ENCODE measurements at regions of chr10 and their contacts with region 1.

Region 1: GRCh38 chr10:43396928-43397624 is 11.9 kb downstream of the HNRNPF start:
- DNase-seq: peak; percentile 44 to 83 (median 59)
- ATAC-seq: peak; percentile 71 to 80 (median 76)
- H3K4me3 ChIP-seq: peak overlapping the region; percentile 39 to 64
- H3K4me3 Mint-ChIP-seq: peak overlapping the region; percentile 80 to 97 (median 89)
- H3K27ac ChIP-seq: peak overlapping the region; percentile 87
- H3K27ac Mint-ChIP-seq: peak overlapping the region; percentile 89 to 95
- H3K4me1 ChIP-seq: peaks cover 51 to 67% of the 10 kb centered on the region in 2 experiments
- H3K4me1 Mint-ChIP-seq: peaks cover 82 to 91% (median 86%) of the 10 kb centered on the region in 3 donors
- H3K27me3 ChIP-seq: no peaks in the 10 kb centered on the region
- H3K27me3 Mint-ChIP-seq: no peaks in the 10 kb centered on the region

Region 2: DNA sequence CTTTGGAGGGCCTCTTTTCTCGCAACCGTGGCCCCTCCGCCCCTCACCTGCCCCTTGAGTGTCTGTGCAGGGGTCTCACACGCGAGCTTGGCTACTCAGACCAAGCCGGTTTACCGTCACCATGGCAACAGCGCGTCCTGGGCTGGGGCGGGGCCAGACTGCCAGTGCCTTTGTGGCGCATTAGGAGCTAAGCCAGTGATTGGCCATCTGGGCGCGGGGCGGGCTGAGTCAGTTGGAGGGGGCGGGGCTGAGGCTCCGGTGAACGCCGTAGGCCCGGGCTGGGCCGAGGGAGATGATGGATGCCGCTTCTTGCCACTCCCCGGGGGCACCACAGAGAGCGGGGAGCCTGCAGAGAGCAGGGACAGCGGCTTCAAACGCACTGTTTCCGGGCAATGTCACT is 74.3 kb before region 1 on chr10:
- CTCF ChIA-PET with region 1: no interaction called
- POLR2A ChIA-PET with region 1: no interaction called
- DNase-seq: peak; percentile 40 to 90 (median 78)
- ATAC-seq: peak; percentile 87 to 99 (median 93)
- H3K4me3 ChIP-seq: peak overlapping the region in 1 of 2 donors; percentile 16
- H3K4me3 Mint-ChIP-seq: peak overlapping the region in 2 of 3 donors; percentile 6 to 57
- H3K27ac ChIP-seq: no peak overlapping the region
- H3K27ac Mint-ChIP-seq: no peak overlapping the region
- H3K4me1 ChIP-seq: peaks cover 0 to 13% of the 10 kb centered on the region in 2 experiments
- H3K4me1 Mint-ChIP-seq: peaks cover 15 to 25% (median 19%) of the 10 kb centered on the region in 3 donors
- H3K27me3 ChIP-seq: peaks cover 0 to 16% of the 10 kb centered on the region in 2 experiments
- H3K27me3 Mint-ChIP-seq: peaks cover 0 to 18% of the 10 kb centered on the region in 2 donors

Region 3: GRCh38 chr10:43407576-43408330 is 10.7 kb after region 1 on chr10:
- CTCF ChIA-PET with region 1: interaction called, 4 to 5 read pairs
- POLR2A ChIA-PET with region 1: interaction called in 1 of 2 experiments, 10 read pairs
- DNase-seq: peak; percentile 49 to 92 (median 76)
- ATAC-seq: peak; percentile 35 to 45 (median 42)
- H3K4me3 ChIP-seq: peak overlapping the region; percentile 75 to 94
- H3K4me3 Mint-ChIP-seq: peak overlapping the region; percentile 94 to 100 (median 97)
- H3K27ac ChIP-seq: peak overlapping the region; percentile 100
- H3K27ac Mint-ChIP-seq: peak overlapping the region; percentile 94 to 99
- H3K4me1 ChIP-seq: peaks cover 20 to 56% of the 10 kb centered on the region in 2 experiments
- H3K4me1 Mint-ChIP-seq: peaks cover 38 to 62% (median 44%) of the 10 kb centered on the region in 3 donors
- H3K27me3 ChIP-seq: no peaks in the 10 kb centered on the region
- H3K27me3 Mint-ChIP-seq: no peaks in the 10 kb centered on the region

Region 4: GRCh38 chr10:43436400-43437140 is 39.5 kb after region 1 on chr10 and contains the start of gene ZNF487:
- CTCF ChIA-PET with region 1: interaction called, 3 to 4 read pairs
- POLR2A ChIA-PET with region 1: interaction called in 1 of 2 experiments, 10 read pairs
- DNase-seq: peak; percentile 72 to 94 (median 83)
- ATAC-seq: peak; percentile 90 to 95 (median 95)
- H3K4me3 ChIP-seq: peak within 1 kb of the TSS; percentile 72 to 92
- H3K4me3 Mint-ChIP-seq: peak within 1 kb of the TSS; percentile 95 to 96 (median 95)
- H3K27ac ChIP-seq: peak within 1 kb of the TSS; percentile 89
- H3K27ac Mint-ChIP-seq: peak within 1 kb of the TSS; percentile 98 to 99
- H3K4me1 ChIP-seq: peaks cover 4 to 25% of the 10 kb centered on the region in 2 experiments
- H3K4me1 Mint-ChIP-seq: peaks cover 16 to 32% (median 18%) of the 10 kb centered on the region in 3 donors
- H3K27me3 ChIP-seq: no peaks in the 10 kb centered on the region
- H3K27me3 Mint-ChIP-seq: no peaks in the 10 kb centered on the region
- total RNA-seq, gene ZNF487: 3.2 to 8.5 (median 5.2) TPM

Region 5: GRCh38 chr10:43453266-43453831 is 56.3 kb after region 1 on chr10:
- CTCF ChIA-PET with region 1: interaction called in 1 of 2 experiments, 3 read pairs
- POLR2A ChIA-PET with region 1: interaction called in 1 of 2 experiments, 11 read pairs
- DNase-seq: peak in 1 of 35 experiments; percentile 16
- ATAC-seq: no peak
- H3K4me3 ChIP-seq: no peak overlapping the region
- H3K4me3 Mint-ChIP-seq: peak overlapping the region; percentile 5 to 97 (median 54)
- H3K27ac ChIP-seq: peak overlapping the region; percentile 94
- H3K27ac Mint-ChIP-seq: peak overlapping the region; percentile 97
- H3K4me1 ChIP-seq: peaks cover 34 to 62% of the 10 kb centered on the region in 2 experiments
- H3K4me1 Mint-ChIP-seq: peaks cover 53% of the 10 kb centered on the region in 3 donors
- H3K27me3 ChIP-seq: no peaks in the 10 kb centered on the region
- H3K27me3 Mint-ChIP-seq: no peaks in the 10 kb centered on the region